ENCODE measurements at regions of chr14 and their contacts with region 1.

Region 1: GRCh38 chr14:92651106-92651757 is 97.2 kb downstream of the LGMN start:
- DNase-seq: peak; percentile 87
- H3K4me3 Mint-ChIP-seq: peak overlapping the region; percentile 96
- H3K27ac Mint-ChIP-seq: peak overlapping the region; percentile 92
- H3K4me1 Mint-ChIP-seq: peaks cover 85% of the 10 kb centered on the region
- H3K27me3 Mint-ChIP-seq: no peaks in the 10 kb centered on the region

Region 2: DNA sequence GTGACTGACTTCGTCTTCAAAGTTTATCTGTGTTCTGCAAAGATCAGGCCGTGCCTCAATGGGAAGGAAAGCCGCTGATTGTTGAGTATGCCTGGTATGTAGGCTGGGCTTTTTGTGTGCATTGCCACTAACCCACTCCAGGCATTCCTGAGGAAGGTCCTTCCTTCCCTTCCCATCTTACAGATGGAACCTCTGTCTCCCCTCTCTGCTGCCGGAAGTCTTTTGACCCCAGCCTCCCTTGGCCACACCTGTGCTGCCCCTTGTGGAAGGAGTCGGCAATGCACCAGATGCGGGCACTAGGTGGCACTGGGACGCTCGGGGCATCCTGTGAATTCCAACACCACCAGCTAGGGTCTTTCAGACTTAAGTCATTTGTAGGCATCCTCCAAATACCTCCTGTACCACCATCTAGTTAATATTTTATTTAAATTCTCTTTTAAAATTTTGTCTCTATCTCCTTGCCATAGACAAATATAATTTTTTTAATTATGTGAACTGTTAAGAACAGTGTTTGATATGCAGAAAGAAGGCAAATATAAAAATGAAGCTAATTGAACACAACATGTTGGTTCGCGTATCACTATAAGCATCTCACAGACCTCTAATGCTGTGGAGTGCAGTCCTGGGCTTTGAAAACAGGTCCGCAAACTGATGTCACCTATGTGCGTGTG is 38.1 kb before region 1 on chr14:
- CTCF ChIA-PET with region 1: interaction called, 7 read pairs
- POLR2A ChIA-PET with region 1: interaction called, 34 read pairs
- DNase-seq: peak; percentile 62
- H3K4me3 Mint-ChIP-seq: no peak overlapping the region
- H3K27ac Mint-ChIP-seq: no peak overlapping the region
- H3K4me1 Mint-ChIP-seq: peaks cover 56% of the 10 kb centered on the region
- H3K27me3 Mint-ChIP-seq: no peaks in the 10 kb centered on the region

Region 3: GRCh38 chr14:92832137-92832700 is 181.0 kb after region 1 on chr14:
- CTCF ChIA-PET with region 1: no interaction called
- POLR2A ChIA-PET with region 1: no interaction called
- DNase-seq: no peak
- H3K4me3 Mint-ChIP-seq: no peak overlapping the region
- H3K27ac Mint-ChIP-seq: no peak overlapping the region
- H3K4me1 Mint-ChIP-seq: no peaks in the 10 kb centered on the region
- H3K27me3 Mint-ChIP-seq: no peaks in the 10 kb centered on the region

Measured in activated CD4-positive, alpha-beta memory T cell treated with anti-CD3 and anti-CD28 coated beads, Interleukin-2, amount 10 ng/mL, durations not matched to agents 7 days and 5 days (primary cell).